ENCODE measurements at regions of chr4 and their contacts with region 1.

Region 1: DNA sequence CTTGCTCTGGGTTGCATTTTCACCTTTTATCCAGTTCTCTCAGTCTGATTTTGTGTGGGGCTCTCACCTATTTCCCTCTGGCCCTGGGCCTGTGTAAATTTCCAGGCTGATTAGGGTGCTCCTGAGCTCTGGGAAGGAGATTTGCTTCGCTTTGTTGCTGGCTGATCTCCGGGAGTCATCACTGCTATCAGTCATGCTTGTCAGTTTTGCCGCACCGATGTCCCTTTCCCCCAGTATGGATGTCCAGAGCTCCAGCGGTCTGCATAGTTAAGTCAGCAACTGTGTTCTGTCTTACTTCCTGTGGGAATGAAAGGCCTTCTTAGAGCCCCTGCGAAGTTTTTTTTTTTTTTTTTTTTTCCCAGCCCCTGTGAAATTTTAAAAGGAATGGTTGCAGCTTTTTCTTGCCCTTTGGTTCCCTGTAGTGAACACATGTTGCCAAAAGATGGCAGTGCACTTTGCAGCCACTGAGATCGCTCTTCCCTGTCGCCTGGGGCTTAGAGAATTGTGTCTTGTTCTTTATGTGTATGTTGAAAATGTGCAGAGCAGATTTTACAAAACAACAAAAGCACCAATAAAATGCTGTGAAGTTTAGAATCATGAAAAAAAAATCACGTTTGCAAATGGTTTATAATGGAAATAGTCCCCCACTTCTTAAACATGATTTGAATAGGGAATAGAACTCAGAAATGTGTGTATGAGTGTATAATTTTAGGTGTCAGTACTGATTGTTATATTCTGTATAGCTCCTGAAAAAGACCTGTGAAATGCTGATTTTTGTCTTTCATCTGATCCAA is 109.1 kb upstream of the SLC4A4 start:
- DNase-seq: peak; percentile 38
- H3K4me3 ChIP-seq: no peak overlapping the region
- CTCF ChIP-seq: peak; percentile 81

Region 2: GRCh38 chr4:71195924-71196323 is 33.8 kb before region 1 on chr4:
- in situ Hi-C with region 1: no loop called
- DNase-seq: no peak
- H3K4me3 ChIP-seq: no peak overlapping the region
- CTCF ChIP-seq: no peak

Region 3: GRCh38 chr4:71713611-71714203 is 484.0 kb after region 1 on chr4:
- in situ Hi-C with region 1: loop called (anchors 25 kb)
- DNase-seq: peak; percentile 72
- H3K4me3 ChIP-seq: no peak overlapping the region
- CTCF ChIP-seq: peak; percentile 48

Region 4: GRCh38 chr4:72513227-72513626 is 1283.6 kb after region 1 on chr4:
- in situ Hi-C with region 1: no loop called
- DNase-seq: no peak
- H3K4me3 ChIP-seq: no peak overlapping the region
- CTCF ChIP-seq: no peak

Measured in astrocyte of the cerebellum (primary cell).